ENCODE measurements at regions of chr1 and their contacts with region 1.

Region 1: GRCh38 chr1:201408176-201408833 is 9.2 kb upstream of the LAD1 start:
- DNase-seq: peak; percentile 67
- ATAC-seq: peak; percentile 76
- H3K4me3 ChIP-seq: no peak overlapping the region
- H3K27ac ChIP-seq: no peak overlapping the region
- H3K4me1 ChIP-seq: peaks cover 55% of the 10 kb centered on the region
- H3K27me3 ChIP-seq: peaks cover 1 to 9% of the 10 kb centered on the region in 2 experiments; a peak in 1 of 5 replicates
- CTCF ChIP-seq: peak; percentile 98
- EP300 ChIP-seq: no peak
- POLR2A ChIP-seq: no peak
- RAD21 ChIP-seq: peak; percentile 82

Region 2: GRCh38 chr1:201385299-201385891 is 22.9 kb before region 1 on chr1:
- CTCF ChIA-PET with region 1: interaction called, 65 read pairs
- POLR2A ChIA-PET with region 1: interaction called, 18 read pairs
- in situ Hi-C with region 1: no loop called
- intact Hi-C with region 1: loop called (anchors 1 kb)
- DNase-seq: peak; percentile 62
- ATAC-seq: peak; percentile 95
- H3K4me3 ChIP-seq: no peak overlapping the region
- H3K27ac ChIP-seq: no peak overlapping the region
- H3K4me1 ChIP-seq: no peaks in the 10 kb centered on the region
- H3K27me3 ChIP-seq: no peaks in the 10 kb centered on the region
- CTCF ChIP-seq: peak; percentile 95
- EP300 ChIP-seq: no peak
- POLR2A ChIP-seq: no peak
- RAD21 ChIP-seq: peak; percentile 89

Region 3: DNA sequence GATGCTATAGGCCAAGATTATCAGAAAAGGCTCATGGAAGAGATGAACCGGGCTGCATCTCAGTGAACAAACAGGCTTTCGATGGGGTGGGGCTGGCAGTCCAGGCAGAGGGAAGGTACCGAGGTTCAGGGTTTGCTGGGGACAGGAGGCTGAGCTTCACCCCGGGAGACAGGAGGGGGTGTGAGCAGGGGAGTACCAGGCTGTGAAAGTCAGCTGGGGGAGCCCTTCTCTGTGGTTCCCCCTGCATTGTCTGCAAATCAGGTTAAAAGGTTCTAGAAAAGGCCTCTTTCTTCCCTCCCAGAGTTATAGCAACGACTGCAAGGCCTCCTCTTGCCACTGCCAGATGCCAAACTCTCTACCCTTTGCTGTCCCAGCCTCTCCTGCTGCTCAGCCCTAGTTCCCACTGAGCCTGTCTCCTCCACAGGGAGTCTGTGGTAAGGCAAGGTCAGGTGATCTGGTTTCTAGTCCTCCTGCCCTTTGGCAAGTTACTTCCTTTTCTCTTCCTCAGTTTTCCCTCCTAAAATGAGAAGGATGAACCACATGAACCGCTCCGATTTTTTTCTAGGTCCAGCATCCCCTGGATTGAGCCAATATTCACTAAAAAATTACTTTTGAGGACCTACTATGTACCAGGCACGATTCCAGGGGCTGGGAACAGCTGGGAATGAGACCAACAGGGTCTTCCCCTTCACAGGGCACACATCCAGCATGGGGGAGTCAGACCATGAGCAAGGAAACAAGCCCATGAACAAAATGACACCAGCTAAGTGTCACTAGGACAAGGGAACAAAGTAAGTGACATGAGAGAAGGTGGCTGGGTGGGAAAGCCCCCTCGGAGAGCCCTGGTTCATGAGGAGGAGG is 16.4 kb before region 1 on chr1:
- CTCF ChIA-PET with region 1: no interaction called
- POLR2A ChIA-PET with region 1: interaction called, 40 read pairs
- in situ Hi-C with region 1: no loop called
- intact Hi-C with region 1: loop called (anchors 1 kb)
- DNase-seq: no peak
- ATAC-seq: no peak
- H3K4me3 ChIP-seq: no peak overlapping the region
- H3K27ac ChIP-seq: no peak overlapping the region
- H3K4me1 ChIP-seq: peaks cover 30% of the 10 kb centered on the region
- H3K27me3 ChIP-seq: no peaks in the 10 kb centered on the region
- CTCF ChIP-seq: no peak
- EP300 ChIP-seq: no peak
- POLR2A ChIP-seq: no peak
- RAD21 ChIP-seq: no peak

Region 4: DNA sequence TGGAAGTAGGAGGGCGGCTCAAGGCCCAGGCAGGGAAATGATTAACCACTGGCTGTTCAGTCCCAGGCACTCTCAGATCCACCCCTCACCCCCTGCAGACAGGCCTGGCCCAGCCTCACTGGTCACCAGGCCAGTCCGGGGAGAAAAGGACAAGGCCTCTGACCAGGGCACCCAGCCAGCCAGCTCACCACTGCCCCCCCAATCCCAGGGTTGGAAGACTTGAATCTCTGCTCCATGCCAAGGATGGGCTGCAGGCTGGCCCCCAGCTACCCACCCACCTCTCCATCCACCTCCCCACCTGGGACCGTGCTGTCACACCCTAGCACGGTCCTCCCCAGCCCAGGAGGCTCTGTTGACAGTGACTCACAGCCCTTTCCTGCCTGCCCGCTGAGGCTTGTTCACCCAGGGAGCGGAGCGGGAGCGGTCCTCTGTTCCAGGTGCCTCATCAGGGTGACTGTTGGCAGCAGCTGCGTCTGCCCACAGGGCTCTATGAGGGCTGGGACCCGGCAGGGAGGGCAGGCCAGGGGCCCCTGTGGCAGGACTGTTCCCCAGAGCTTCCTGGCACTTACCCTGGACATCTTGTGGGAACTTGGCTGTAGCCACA is 11.3 kb before region 1 on chr1:
- CTCF ChIA-PET with region 1: interaction called, 3 read pairs
- POLR2A ChIA-PET with region 1: interaction called, 40 read pairs
- in situ Hi-C with region 1: no loop called
- intact Hi-C with region 1: loop called (anchors 1 kb)
- DNase-seq: peak; percentile 77
- ATAC-seq: peak; percentile 87
- H3K4me3 ChIP-seq: peak overlapping the region; percentile 77 to 82 (median 79)
- H3K27ac ChIP-seq: peak overlapping the region; percentile 84
- H3K4me1 ChIP-seq: peaks cover 61% of the 10 kb centered on the region
- H3K27me3 ChIP-seq: no peaks in the 10 kb centered on the region
- CTCF ChIP-seq: peak; percentile 53
- EP300 ChIP-seq: peak; percentile 25 to 33; a peak in 1 of 4 replicates
- POLR2A ChIP-seq: peak; percentile 47 to 53; a peak in 3 of 4 replicates
- RAD21 ChIP-seq: peak; percentile 18; the same call in 1 of the 2 replicates

Measured in HepG2 (cell line).